Activated CD8-positive, alpha-beta memory T cell treated with anti-CD3 and anti-CD28 coated beads, Interleukin-2, amount 10 ng/mL, durations not matched to agents 7 days and 5 days (primary cell): ENCODE measurements at regions of chr12 and their contacts with region 1.

Region 1: DNA sequence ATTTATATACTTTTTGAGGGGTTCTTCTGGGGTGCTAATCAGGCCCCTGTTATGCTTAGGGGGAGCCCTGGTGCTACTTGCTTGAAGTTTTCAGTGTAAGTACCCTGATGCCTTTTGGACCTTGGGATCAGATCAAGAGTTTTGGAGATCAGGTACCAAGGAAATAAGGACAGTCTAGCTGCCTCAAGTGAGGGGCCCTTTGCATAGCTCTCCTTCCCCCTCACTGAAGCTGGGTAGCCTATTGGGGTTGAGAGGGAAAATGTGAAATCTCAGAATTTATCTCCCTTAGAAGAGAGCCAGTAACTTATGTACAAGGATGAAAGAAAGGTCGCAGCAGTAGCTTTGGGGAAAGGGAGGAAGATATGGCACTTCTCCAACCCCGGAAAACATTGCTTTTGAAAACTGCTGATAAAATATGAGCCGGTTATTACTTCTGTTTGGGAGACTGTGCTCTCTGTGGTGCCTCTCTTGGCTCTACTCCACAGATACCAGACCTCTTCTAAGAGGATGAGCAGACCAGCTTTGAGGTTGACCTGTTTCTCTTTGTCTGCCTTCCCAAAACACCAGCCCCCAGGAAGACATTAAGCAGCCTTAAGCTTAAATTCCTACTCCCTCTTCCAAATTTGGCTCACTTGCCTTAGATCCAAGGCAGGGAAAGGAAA is 8.8 kb upstream of the AMHR2 start:
- DNase-seq: no peak
- ATAC-seq: no peak
- H3K4me3 Mint-ChIP-seq: no peak overlapping the region
- H3K27ac Mint-ChIP-seq: no peak overlapping the region
- H3K4me1 Mint-ChIP-seq: peaks cover 23% of the 10 kb centered on the region
- H3K27me3 Mint-ChIP-seq: no peaks in the 10 kb centered on the region

Region 2: DNA sequence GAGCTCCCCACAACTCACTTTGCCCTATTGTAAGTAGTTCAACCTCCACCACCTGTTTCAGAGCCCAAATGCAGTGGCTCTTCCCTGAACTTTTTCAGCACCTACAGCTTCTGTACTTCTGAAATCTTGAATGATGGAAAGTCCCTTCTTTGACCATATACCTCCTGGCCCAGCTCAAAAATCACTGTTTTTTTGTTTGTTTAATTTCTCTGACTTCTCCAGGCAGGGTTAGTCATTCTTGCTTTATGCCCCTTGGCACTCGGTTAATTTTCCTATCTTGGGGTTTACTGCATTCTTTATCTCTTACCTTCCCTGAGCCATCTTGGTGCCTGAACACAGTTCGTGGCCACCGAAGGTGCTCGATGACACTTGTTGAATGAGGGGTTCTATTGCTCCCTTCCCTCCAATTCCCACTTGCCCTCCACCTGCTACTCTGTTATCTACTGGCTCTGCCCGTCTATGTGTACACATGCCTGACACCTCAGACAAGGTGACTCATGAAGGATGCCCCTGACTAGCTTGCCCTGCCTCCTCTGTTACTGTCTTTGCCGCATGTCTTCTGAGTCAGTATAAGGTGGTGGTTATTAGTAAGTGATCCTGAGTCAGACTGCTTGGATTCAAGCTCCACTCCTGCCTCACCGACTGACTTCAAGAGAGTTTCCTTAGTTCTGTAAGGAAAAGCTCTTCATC is 13.2 kb after region 1 on chr12:
- CTCF ChIA-PET with region 1: interaction called, 10 read pairs
- DNase-seq: no peak
- ATAC-seq: peak; percentile 78
- H3K4me3 Mint-ChIP-seq: no peak overlapping the region
- H3K27ac Mint-ChIP-seq: no peak overlapping the region
- H3K4me1 Mint-ChIP-seq: peaks cover 3% of the 10 kb centered on the region
- H3K27me3 Mint-ChIP-seq: no peaks in the 10 kb centered on the region

Region 3: DNA sequence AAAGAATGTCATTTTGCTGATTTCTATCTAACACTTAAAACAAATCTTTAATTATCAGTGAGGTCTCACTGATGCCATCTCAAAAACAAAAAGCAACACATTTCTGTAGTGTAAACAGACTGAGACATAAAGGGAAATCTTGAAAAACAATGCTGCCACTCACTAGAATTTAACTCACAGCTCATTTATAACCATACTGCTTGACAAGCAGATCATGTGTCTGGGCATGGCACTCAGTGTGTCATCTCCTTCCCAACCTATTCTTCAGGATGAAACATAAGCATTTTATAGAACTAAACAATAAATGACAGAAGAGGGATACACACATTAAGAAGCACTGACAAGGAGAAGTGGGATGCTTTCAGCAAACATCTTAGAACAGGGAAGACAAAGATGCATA is 188.9 kb after region 1 on chr12:
- CTCF ChIA-PET with region 1: no interaction called
- DNase-seq: no peak
- ATAC-seq: no peak
- H3K4me3 Mint-ChIP-seq: no peak overlapping the region
- H3K27ac Mint-ChIP-seq: no peak overlapping the region
- H3K4me1 Mint-ChIP-seq: peaks cover 16% of the 10 kb centered on the region
- H3K27me3 Mint-ChIP-seq: no peaks in the 10 kb centered on the region